Panc1 (cell line): ENCODE measurements at regions of chr7 and their contacts with region 1.

Region 1: GRCh38 chr7:110790992-110791391 is 299.9 kb upstream of the LRRN3 start:
- DNase-seq: no peak
- ATAC-seq: no peak
- H3K4me3 ChIP-seq: no peak overlapping the region
- H3K27ac ChIP-seq: no peak overlapping the region
- H3K4me1 ChIP-seq: no peaks in the 10 kb centered on the region
- H3K27me3 ChIP-seq: no peaks in the 10 kb centered on the region
- CTCF ChIP-seq: no peak

Region 2: DNA sequence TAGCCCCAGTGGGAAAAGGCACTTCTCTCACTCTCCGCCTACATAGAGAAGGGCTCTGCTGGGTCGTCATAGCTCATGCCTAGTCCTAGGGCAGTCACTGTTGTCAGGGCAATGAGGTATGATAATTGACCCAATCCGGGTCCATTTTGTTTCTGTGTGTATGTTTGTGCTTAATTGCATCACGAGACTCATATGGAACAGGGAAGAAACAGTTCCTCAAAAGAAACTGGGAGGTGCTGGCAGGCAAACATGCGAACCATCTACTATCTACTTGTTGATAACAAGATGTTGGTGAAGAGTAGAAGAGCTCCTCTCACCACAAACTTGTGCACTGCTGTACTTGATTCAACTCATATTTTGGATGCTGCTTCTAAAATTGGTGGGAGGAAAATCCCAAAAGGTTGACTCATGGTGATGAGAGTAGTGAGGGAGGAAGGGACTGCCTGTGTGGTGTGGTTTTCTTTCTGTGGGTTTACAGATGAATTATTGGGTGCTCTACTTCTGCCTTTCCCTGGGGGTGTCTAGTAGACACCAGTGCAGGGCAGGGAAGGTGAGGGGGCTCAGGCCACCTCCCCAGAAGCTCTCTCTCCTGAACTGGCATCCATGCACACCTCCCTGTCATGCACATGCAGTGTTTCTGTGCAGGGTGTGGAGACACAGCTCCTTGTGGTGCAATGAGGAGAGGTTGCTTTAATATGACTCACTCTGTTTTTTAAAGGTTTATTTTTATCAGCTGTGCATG is 1719.2 kb after region 1 on chr7:
- CTCF ChIA-PET with region 1: no interaction called
- POLR2A ChIA-PET with region 1: no interaction called
- in situ Hi-C with region 1: no loop called
- intact Hi-C with region 1: loop called (anchors 10 kb)
- DNase-seq: no peak
- ATAC-seq: no peak
- H3K4me3 ChIP-seq: no peak overlapping the region
- H3K27ac ChIP-seq: no peak overlapping the region
- H3K4me1 ChIP-seq: no peaks in the 10 kb centered on the region
- H3K27me3 ChIP-seq: peaks cover 5% of the 10 kb centered on the region; the same call in 1 of the 2 replicates
- CTCF ChIP-seq: no peak